Thyroid gland (tissue), 4 donors: ENCODE measurements at regions of chr9 and their contacts with region 1.

Region 1: DNA sequence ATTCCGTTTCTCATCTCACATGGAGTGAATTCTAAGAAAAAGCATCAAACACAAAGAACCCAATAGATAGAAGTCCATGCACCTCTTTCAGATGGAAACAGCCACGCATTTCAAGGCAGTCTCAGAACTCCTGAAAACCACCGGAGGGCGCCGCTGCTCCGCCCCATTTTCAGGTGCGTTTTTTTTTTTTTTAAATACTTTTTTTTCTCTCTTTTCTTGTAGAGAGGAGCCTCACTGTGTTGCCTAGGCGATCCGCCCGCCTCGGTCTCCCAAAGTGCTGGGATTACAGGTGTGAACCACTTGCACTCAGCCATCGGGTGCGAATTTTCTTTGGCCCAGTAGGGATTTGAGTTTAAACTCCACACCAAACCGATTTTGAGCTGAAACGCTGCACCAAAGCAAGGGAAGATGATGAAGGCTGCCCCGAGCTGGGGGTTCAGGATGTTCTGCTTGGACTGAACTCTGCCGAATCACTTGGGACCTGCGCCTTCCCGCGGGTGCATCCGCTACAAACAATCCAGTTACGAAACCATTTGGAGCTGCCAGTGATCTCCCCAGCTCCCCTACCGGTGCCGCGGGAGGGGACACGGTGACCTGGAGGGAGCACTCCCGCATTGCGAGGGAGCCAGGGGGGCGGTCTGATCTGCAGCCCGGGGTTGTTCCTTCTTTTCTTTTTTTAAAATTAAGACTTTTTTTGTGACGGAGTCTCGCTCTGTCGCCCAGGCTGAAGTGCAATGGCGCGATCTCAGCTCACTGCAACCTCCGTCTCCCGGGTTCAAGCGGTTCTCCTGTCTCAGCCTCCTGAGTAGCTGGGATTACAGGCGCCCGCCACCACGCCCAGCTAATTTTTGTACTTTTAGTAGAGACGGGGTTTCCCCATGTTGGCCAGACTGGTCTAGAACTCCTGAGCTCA is 1.4 kb downstream of the PTGR1 start:
- DNase-seq: peak; percentile 77 to 85
- H3K4me3 ChIP-seq: peak overlapping the region; percentile 16 to 68 (median 47)
- H3K27ac ChIP-seq: peak overlapping the region; percentile 59 to 89 (median 75)
- H3K4me1 ChIP-seq: peaks cover 0 to 8% of the 10 kb centered on the region in 2 donors
- H3K27me3 ChIP-seq: no peaks in the 10 kb centered on the region
- CTCF ChIP-seq: peak; percentile 36 to 94 (median 65)
- POLR2A ChIP-seq: no peak

Region 2: GRCh38 chr9:111491372-111491771 is 106.7 kb before region 1 on chr9:
- intact Hi-C with region 1: no loop called
- DNase-seq: no peak
- H3K4me3 ChIP-seq: no peak overlapping the region
- H3K27ac ChIP-seq: no peak overlapping the region
- H3K4me1 ChIP-seq: no peaks in the 10 kb centered on the region
- H3K27me3 ChIP-seq: no peaks in the 10 kb centered on the region
- CTCF ChIP-seq: no peak
- POLR2A ChIP-seq: no peak

Region 3: GRCh38 chr9:111691672-111692329 is 93.7 kb after region 1 on chr9:
- intact Hi-C with region 1: loop called (anchors 10 kb)
- DNase-seq: no peak
- H3K4me3 ChIP-seq: no peak overlapping the region
- H3K27ac ChIP-seq: no peak overlapping the region
- H3K4me1 ChIP-seq: peaks cover 0 to 7% of the 10 kb centered on the region in 2 donors
- H3K27me3 ChIP-seq: no peaks in the 10 kb centered on the region
- CTCF ChIP-seq: peak in 4 of 6 experiments; percentile 5 to 48 (median 40)
- POLR2A ChIP-seq: no peak

Region 4: DNA sequence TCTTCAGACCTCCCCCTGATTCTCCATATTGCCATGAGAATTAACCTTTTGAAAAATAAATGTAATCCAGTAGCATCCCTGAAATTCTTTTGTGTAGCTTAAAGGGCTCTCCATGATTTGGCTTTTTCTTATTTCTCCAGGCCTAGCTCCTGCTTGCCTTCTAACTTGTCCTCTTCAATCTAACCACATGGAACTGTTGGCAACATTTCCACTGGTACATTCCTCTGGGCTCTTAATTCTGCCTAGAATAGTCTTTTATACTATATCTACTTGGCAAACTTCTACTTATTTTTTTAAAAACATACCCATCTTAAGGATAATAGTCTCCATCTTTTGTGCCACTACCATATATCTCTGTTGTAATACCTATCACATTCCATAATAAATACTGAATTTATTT is 117.4 kb after region 1 on chr9:
- intact Hi-C with region 1: no loop called
- DNase-seq: no peak
- H3K4me3 ChIP-seq: no peak overlapping the region
- H3K27ac ChIP-seq: no peak overlapping the region
- H3K4me1 ChIP-seq: no peaks in the 10 kb centered on the region
- H3K27me3 ChIP-seq: no peaks in the 10 kb centered on the region
- CTCF ChIP-seq: no peak
- POLR2A ChIP-seq: no peak